ENCODE measurements at regions of chr11 and their contacts with region 1.

Region 1: DNA sequence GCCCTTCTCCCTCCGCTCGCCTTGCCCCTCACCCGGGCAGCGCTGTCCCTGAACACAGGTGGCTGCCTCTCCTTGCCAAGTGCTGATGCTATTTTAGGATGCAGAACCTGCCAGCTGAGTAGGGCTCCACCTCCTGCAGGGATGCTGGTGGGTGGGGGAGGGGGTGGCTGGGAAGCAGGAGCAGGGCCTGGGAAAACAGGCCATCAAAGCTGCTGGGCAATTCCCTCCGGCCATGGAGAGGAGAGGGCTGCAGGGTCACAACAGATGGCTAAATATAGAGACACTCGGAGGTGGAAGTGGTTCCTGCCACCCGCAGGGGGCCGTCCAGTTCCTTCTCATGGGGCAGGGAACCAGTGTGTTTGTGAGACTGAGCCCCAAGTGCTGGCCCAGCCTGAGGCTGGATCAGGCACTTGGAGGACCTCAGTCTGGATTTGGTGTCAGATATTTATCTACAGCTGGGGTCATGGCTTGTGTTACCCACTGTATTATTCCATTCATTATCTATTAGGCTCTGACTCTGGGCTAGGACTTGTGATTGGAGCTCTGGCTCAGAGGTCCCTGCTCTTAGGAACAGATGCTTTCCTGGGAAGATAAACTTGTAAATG is 59.6 kb downstream of the LRRC32 start:
- DNase-seq: peak; percentile 52 to 76 (median 63)
- H3K4me3 ChIP-seq: no peak overlapping the region
- H3K4me3 Mint-ChIP-seq: no peak overlapping the region
- H3K27ac ChIP-seq: no peak overlapping the region
- H3K27ac Mint-ChIP-seq: no peak overlapping the region
- H3K4me1 ChIP-seq: no peaks in the 10 kb centered on the region
- H3K4me1 Mint-ChIP-seq: peaks cover 2% of the 10 kb centered on the region
- H3K27me3 ChIP-seq: peaks cover 0 to 3% of the 10 kb centered on the region in 2 donors
- H3K27me3 Mint-ChIP-seq: peaks cover 7 to 15% (median 11%) of the 10 kb centered on the region in 3 donors
- CTCF ChIP-seq: peak; percentile 74

Region 2: GRCh38 chr11:76656571-76657081 is 45.7 kb after region 1 on chr11:
- intact Hi-C with region 1: loop called in 1 of 2 experiments (anchors 5 kb)
- DNase-seq: no peak
- H3K4me3 ChIP-seq: no peak overlapping the region
- H3K4me3 Mint-ChIP-seq: peak overlapping the region in 1 of 2 donors; percentile 62
- H3K27ac ChIP-seq: no peak overlapping the region
- H3K27ac Mint-ChIP-seq: peak overlapping the region in 2 of 7 donors; percentile 10 to 41
- H3K4me1 ChIP-seq: peaks cover 0 to 9% of the 10 kb centered on the region in 2 donors
- H3K4me1 Mint-ChIP-seq: peaks cover 14% of the 10 kb centered on the region
- H3K27me3 ChIP-seq: no peaks in the 10 kb centered on the region
- H3K27me3 Mint-ChIP-seq: peaks cover 5 to 23% (median 6%) of the 10 kb centered on the region in 3 donors
- CTCF ChIP-seq: no peak

Region 3: GRCh38 chr11:76670485-76671236 is 59.7 kb after region 1 on chr11 and contains the start of gene LRRC32:
- intact Hi-C with region 1: loop called in 1 of 2 experiments (anchors 5 kb)
- DNase-seq: peak; percentile 76 to 84 (median 81)
- H3K4me3 ChIP-seq: peak within 1 kb of the TSS in 2 of 3 experiments; percentile 0 to 65
- H3K4me3 Mint-ChIP-seq: peak within 1 kb of the TSS; percentile 73 to 83
- H3K27ac ChIP-seq: no peak within 1 kb of the TSS
- H3K27ac Mint-ChIP-seq: peak within 1 kb of the TSS in 6 of 7 donors; percentile 53 to 93 (median 77)
- H3K4me1 ChIP-seq: peaks cover 27 to 35% of the 10 kb centered on the region in 2 donors
- H3K4me1 Mint-ChIP-seq: peaks cover 35% of the 10 kb centered on the region
- H3K27me3 ChIP-seq: peaks cover 25 to 60% of the 10 kb centered on the region in 2 donors
- H3K27me3 Mint-ChIP-seq: peaks cover 44 to 80% (median 57%) of the 10 kb centered on the region in 3 donors
- CTCF ChIP-seq: no peak
- polyA plus RNA-seq, gene LRRC32: 1.5 TPM in 1 of 3 donors, not detected in the others

Region 4: GRCh38 chr11:76680518-76681425 is 69.8 kb after region 1 on chr11:
- intact Hi-C with region 1: loop called (anchors 2 to 5 kb)
- DNase-seq: peak; percentile 44 to 77 (median 67)
- H3K4me3 ChIP-seq: no peak overlapping the region
- H3K4me3 Mint-ChIP-seq: no peak overlapping the region
- H3K27ac ChIP-seq: no peak overlapping the region
- H3K27ac Mint-ChIP-seq: peak overlapping the region in 2 of 7 donors; percentile 27 to 79
- H3K4me1 ChIP-seq: peaks cover 15 to 16% of the 10 kb centered on the region in 2 donors
- H3K4me1 Mint-ChIP-seq: peaks cover 33% of the 10 kb centered on the region
- H3K27me3 ChIP-seq: peaks cover 0 to 12% of the 10 kb centered on the region in 2 donors
- H3K27me3 Mint-ChIP-seq: peaks cover 35 to 52% (median 38%) of the 10 kb centered on the region in 3 donors
- CTCF ChIP-seq: peak; percentile 89

Measured in CD14-positive monocyte (primary cell).